Thyroid gland (tissue), 4 donors: ENCODE measurements at regions of chr1 and their contacts with region 1.

Region 1: GRCh38 chr1:24849672-24850295 is 80.3 kb downstream of the RUNX3 start:
- DNase-seq: no peak
- H3K4me3 ChIP-seq: no peak overlapping the region
- H3K27ac ChIP-seq: no peak overlapping the region
- H3K4me1 ChIP-seq: peaks cover 7 to 9% of the 10 kb centered on the region in 2 donors
- H3K27me3 ChIP-seq: no peaks in the 10 kb centered on the region
- CTCF ChIP-seq: peak in 1 of 6 experiments; percentile 5
- POLR2A ChIP-seq: no peak

Region 2: GRCh38 chr1:24897767-24898483 is 48.1 kb after region 1 on chr1:
- intact Hi-C with region 1: loop called (anchors 5 kb)
- DNase-seq: peak; percentile 30 to 31
- H3K4me3 ChIP-seq: no peak overlapping the region
- H3K27ac ChIP-seq: no peak overlapping the region
- H3K4me1 ChIP-seq: peaks cover 0 to 9% of the 10 kb centered on the region in 2 donors
- H3K27me3 ChIP-seq: no peaks in the 10 kb centered on the region
- CTCF ChIP-seq: peak in 4 of 6 experiments; percentile 61 to 76 (median 72)
- POLR2A ChIP-seq: no peak

Region 3: GRCh38 chr1:25099343-25099951 is 249.7 kb after region 1 on chr1:
- intact Hi-C with region 1: loop called (anchors 10 kb)
- DNase-seq: no peak
- H3K4me3 ChIP-seq: no peak overlapping the region
- H3K27ac ChIP-seq: no peak overlapping the region
- H3K4me1 ChIP-seq: no peaks in the 10 kb centered on the region
- H3K27me3 ChIP-seq: no peaks in the 10 kb centered on the region
- CTCF ChIP-seq: no peak
- POLR2A ChIP-seq: no peak

Region 4: GRCh38 chr1:25204797-25205480 is 355.2 kb after region 1 on chr1:
- intact Hi-C with region 1: loop called (anchors 5 kb)
- DNase-seq: peak in 1 of 2 donors; percentile 8
- H3K4me3 ChIP-seq: no peak overlapping the region
- H3K27ac ChIP-seq: no peak overlapping the region
- H3K4me1 ChIP-seq: no peaks in the 10 kb centered on the region
- H3K27me3 ChIP-seq: no peaks in the 10 kb centered on the region
- CTCF ChIP-seq: peak; percentile 29 to 74 (median 67)
- POLR2A ChIP-seq: no peak